ENCODE measurements at regions of chr3 and their contacts with region 1.

Region 1: DNA sequence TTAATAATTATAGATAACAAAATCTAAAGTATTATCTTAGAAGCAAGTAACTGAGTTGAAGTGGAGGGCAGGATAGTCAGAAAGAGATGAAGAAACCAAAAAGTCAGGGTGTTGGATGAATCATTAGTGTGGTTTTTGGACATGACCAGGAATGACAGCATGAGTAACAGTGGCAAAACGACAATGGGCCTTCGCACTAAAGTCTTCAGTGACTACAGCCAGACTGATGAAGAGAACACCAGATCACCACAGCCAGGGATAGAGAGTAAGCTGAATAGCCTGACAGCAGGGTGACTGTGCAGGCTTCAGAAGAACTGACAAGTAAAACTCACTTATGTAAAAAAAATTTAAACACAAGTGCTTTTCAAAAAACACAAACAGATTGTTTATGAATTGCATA is 96.0 kb upstream of the MELTF start:
- DNase-seq: peak; percentile 84
- H3K4me3 ChIP-seq: no peak overlapping the region
- H3K27ac ChIP-seq: no peak overlapping the region
- H3K4me1 ChIP-seq: peaks cover 10% of the 10 kb centered on the region
- H3K27me3 ChIP-seq: no peaks in the 10 kb centered on the region
- CTCF ChIP-seq: no peak

Region 2: GRCh38 chr3:197174927-197175326 is 49.3 kb after region 1 on chr3:
- CTCF ChIA-PET with region 1: no interaction called
- dilution Hi-C with region 1: loop called (anchors 5 kb)
- in situ Hi-C with region 1: no loop called
- intact Hi-C with region 1: no loop called
- DNase-seq: no peak
- H3K4me3 ChIP-seq: no peak overlapping the region
- H3K27ac ChIP-seq: no peak overlapping the region
- H3K4me1 ChIP-seq: peaks cover 4% of the 10 kb centered on the region
- H3K27me3 ChIP-seq: no peaks in the 10 kb centered on the region
- CTCF ChIP-seq: no peak

Region 3: GRCh38 chr3:197331131-197331530 is 205.5 kb after region 1 on chr3:
- CTCF ChIA-PET with region 1: no interaction called
- dilution Hi-C with region 1: no loop called
- in situ Hi-C with region 1: no loop called
- intact Hi-C with region 1: no loop called
- DNase-seq: no peak
- H3K4me3 ChIP-seq: no peak overlapping the region
- H3K27ac ChIP-seq: no peak overlapping the region
- H3K4me1 ChIP-seq: no peaks in the 10 kb centered on the region
- H3K27me3 ChIP-seq: no peaks in the 10 kb centered on the region
- CTCF ChIP-seq: peak in 1 of 2 donors; percentile 26